Activated CD4-positive, alpha-beta memory T cell treated with anti-CD3 and anti-CD28 coated beads for 36 hours (primary cell): ENCODE measurements at regions of chr4 and their contacts with region 1.

Region 1: GRCh38 chr4:175271010-175271630 is 353.0 kb downstream of the ADAM29 start:
- DNase-seq: no peak
- H3K4me3 Mint-ChIP-seq: no peak overlapping the region
- H3K27ac Mint-ChIP-seq: no peak overlapping the region
- H3K4me1 Mint-ChIP-seq: no peaks in the 10 kb centered on the region
- H3K27me3 Mint-ChIP-seq: no peaks in the 10 kb centered on the region

Region 2: DNA sequence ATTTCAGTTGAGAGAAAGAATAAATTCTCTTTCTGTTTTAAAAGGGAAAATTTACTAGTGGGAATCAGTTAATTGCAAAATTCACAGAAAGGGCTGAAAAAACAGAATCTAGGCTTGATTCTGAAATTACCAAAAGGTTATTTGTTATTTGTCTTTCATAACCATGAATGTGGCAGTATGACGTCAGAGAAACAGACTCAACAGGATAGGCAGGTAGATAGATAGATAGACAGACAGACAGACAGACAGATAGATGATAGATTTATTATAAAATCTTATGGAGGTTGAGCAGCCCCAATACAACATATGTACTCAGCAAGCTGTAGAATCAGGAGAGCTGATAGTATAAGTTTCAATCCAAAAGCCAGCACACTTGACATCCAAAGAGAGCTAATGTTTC is 41.9 kb before region 1 on chr4:
- CTCF ChIA-PET with region 1: no interaction called
- POLR2A ChIA-PET with region 1: no interaction called
- intact Hi-C with region 1: loop called (anchors 2 kb)
- DNase-seq: no peak
- H3K4me3 Mint-ChIP-seq: no peak overlapping the region
- H3K27ac Mint-ChIP-seq: no peak overlapping the region
- H3K4me1 Mint-ChIP-seq: no peaks in the 10 kb centered on the region
- H3K27me3 Mint-ChIP-seq: no peaks in the 10 kb centered on the region

Region 3: GRCh38 chr4:175253184-175253902 is 17.8 kb before region 1 on chr4:
- CTCF ChIA-PET with region 1: no interaction called
- POLR2A ChIA-PET with region 1: no interaction called
- intact Hi-C with region 1: no loop called
- DNase-seq: no peak
- H3K4me3 Mint-ChIP-seq: no peak overlapping the region
- H3K27ac Mint-ChIP-seq: no peak overlapping the region
- H3K4me1 Mint-ChIP-seq: no peaks in the 10 kb centered on the region
- H3K27me3 Mint-ChIP-seq: no peaks in the 10 kb centered on the region